Ovary (tissue), 10 donors: ENCODE measurements at regions of chr5 and their contacts with region 1.

Region 1: DNA sequence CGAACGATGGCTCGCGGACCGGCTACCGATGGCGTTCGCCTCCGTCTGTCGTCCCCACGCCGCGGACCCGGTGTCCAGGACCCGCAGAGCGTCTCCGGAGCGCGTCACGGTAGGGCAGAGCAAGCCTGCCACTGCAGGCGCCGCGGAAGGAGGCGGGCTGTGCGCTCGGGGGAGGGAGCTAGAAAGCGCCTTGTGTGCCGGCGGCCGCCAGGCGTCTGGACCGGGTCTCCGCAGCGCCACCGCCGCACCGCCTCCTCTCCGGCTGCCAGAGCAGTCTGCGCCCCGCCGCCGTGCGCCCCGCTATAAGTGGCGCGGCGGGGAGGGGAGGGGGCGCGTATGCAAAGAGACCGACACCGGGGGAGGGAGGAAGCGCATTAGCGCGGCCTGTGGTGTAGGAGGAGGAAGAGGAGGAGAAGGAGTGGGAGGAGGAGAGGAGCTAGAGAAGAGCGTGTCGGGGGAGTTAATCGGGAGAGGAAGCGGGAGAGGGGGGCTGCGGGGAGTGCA is at the start of gene ENC1:
- DNase-seq: peak; percentile 73 to 86 (median 83)
- H3K4me3 ChIP-seq: peak within 1 kb of the TSS; percentile 73
- H3K27ac ChIP-seq: peak within 1 kb of the TSS; percentile 56 to 60
- H3K4me1 ChIP-seq: peaks cover 6% of the 10 kb centered on the region
- H3K27me3 ChIP-seq: no peaks in the 10 kb centered on the region
- CTCF ChIP-seq: peak; percentile 38 to 85 (median 84)
- EP300 ChIP-seq: no peak
- POLR2A ChIP-seq: peak; percentile 26
- total RNA-seq, gene ENC1: 13.2 to 54.7 (median 23.4) TPM

Region 2: DNA sequence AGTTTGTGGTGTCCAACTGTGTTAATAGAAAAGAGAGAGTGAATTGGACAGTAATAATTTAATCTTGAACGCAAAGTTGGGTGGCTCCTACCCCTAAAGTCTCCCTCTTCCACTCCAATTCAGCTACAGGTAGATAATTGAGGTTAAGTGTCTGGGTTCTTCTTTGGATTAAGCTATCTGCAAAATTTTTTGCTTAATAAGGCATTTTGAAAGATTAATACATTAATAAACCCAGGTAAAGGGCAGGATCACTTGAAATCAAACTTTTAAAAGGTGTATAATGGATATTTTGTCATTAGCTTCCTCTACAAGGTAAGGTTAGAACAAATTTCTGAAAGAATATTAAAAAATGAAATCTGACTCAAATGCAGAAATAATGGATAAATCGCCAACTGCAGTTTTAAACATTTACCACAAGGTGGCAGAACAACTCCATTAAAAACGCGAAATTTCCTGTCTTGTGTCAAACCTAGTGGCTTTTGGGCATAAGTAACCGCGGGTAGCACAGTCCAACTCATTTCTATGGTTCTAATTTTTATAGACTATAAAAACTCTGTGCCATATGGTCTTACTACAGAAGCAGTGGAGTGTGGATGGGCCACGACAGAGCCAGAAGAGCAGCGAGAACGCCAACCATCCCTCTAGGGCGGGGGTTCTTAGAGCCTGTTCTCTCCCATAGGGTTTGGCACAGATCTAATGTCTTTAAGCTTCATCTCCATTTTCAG is 738.0 kb before region 1 on chr5:
- intact Hi-C with region 1: loop called (anchors 2 to 5 kb)
- DNase-seq: peak in 1 of 5 donors; percentile 39
- H3K4me3 ChIP-seq: no peak overlapping the region
- H3K27ac ChIP-seq: no peak overlapping the region
- H3K4me1 ChIP-seq: no peaks in the 10 kb centered on the region
- H3K27me3 ChIP-seq: no peaks in the 10 kb centered on the region
- CTCF ChIP-seq: peak; percentile 70 to 93 (median 92)
- EP300 ChIP-seq: no peak
- POLR2A ChIP-seq: no peak

Region 3: DNA sequence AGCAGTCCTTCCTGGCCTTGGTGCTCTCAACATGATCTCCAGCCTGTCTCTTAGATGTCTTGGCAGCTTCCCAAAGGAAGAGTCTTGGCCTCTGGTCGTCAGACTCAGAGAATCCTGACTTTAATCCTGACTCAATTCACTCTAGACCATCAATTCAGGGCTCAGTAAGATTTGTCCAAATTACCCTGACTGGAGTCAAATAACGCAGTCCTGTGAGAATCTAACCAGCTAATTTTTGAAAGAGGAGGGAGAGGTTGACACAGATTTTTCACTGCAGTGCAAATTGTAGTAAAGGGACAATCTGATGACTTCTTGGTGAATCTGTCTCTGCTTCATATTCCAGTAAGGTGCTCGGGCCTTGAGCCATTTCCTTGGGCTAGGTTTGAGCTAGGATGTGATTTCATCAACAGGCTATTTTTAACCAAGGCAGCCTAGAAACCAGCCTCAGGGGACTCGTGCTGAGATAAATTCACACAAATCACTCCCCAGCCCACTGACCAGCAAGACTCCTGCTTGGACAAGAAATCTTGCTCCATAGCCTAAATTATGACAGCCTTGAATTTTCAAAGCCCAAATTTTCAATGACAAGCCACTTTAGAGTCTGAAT is 257.4 kb before region 1 on chr5:
- intact Hi-C with region 1: loop called in 1 of 4 experiments (anchors 10 kb)
- DNase-seq: peak in 3 of 5 donors; percentile 13 to 63 (median 41)
- H3K4me3 ChIP-seq: no peak overlapping the region
- H3K27ac ChIP-seq: peak overlapping the region in 1 of 2 donors; percentile 23
- H3K4me1 ChIP-seq: peaks cover 11% of the 10 kb centered on the region
- H3K27me3 ChIP-seq: no peaks in the 10 kb centered on the region
- CTCF ChIP-seq: no peak
- EP300 ChIP-seq: no peak
- POLR2A ChIP-seq: no peak

Region 4: GRCh38 chr5:74452856-74453255 is 187.6 kb before region 1 on chr5:
- intact Hi-C with region 1: loop called in 2 of 4 experiments (anchors 10 kb)
- DNase-seq: no peak
- H3K4me3 ChIP-seq: no peak overlapping the region
- H3K27ac ChIP-seq: no peak overlapping the region
- H3K4me1 ChIP-seq: peaks cover 1% of the 10 kb centered on the region
- H3K27me3 ChIP-seq: no peaks in the 10 kb centered on the region
- CTCF ChIP-seq: no peak
- EP300 ChIP-seq: no peak
- POLR2A ChIP-seq: no peak